Esophagus squamous epithelium (tissue), 5 donors: ENCODE measurements at regions of chr9 and their contacts with region 1.

Region 1: DNA sequence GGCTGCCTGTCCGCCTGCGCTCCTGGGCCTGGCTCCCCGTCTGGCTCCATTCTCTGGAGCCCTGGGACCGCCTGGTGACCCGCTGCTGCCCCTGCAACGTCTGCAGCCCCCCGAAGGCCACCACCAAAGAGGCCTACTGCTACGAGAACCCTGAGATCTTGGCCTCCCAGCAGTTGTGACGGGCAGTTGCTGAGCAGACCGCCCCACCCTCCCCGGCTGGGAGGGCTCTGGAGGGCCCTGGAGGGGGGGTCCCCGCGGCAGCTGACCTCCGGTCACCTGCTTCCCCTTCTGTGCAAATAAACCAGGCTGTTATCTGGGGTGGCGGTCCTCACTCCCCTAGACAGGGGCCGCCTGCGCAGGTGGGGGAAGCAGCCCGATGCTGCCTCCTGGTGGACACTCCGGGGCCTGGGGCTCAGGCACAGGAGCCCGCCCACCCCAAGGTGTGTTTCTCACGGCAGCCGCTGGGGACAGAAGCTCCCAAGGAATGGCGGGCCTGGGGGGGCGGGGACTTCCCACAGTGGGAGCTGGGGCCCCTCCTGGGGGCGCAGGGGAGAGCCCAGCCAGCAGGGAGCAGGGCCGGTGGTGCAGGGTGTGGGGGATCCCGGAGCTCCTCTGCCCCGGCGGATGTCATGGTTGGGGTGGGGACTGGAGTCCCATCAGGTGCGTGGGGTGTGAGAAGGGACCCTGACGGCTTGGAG is 4.7 kb upstream of the TUBB4B start:
- DNase-seq: no peak
- H3K4me3 ChIP-seq: peak overlapping the region in 3 of 4 donors; percentile 7 to 40 (median 7)
- H3K27ac ChIP-seq: peak overlapping the region in 1 of 4 donors; percentile 39
- H3K4me1 ChIP-seq: peaks cover 16 to 53% (median 23%) of the 10 kb centered on the region in 3 donors
- H3K27me3 ChIP-seq: peaks cover 0 to 49% (median 0%) of the 10 kb centered on the region in 4 donors
- CTCF ChIP-seq: peak; percentile 99 to 100 (median 100)
- POLR2A ChIP-seq: no peak

Region 2: DNA sequence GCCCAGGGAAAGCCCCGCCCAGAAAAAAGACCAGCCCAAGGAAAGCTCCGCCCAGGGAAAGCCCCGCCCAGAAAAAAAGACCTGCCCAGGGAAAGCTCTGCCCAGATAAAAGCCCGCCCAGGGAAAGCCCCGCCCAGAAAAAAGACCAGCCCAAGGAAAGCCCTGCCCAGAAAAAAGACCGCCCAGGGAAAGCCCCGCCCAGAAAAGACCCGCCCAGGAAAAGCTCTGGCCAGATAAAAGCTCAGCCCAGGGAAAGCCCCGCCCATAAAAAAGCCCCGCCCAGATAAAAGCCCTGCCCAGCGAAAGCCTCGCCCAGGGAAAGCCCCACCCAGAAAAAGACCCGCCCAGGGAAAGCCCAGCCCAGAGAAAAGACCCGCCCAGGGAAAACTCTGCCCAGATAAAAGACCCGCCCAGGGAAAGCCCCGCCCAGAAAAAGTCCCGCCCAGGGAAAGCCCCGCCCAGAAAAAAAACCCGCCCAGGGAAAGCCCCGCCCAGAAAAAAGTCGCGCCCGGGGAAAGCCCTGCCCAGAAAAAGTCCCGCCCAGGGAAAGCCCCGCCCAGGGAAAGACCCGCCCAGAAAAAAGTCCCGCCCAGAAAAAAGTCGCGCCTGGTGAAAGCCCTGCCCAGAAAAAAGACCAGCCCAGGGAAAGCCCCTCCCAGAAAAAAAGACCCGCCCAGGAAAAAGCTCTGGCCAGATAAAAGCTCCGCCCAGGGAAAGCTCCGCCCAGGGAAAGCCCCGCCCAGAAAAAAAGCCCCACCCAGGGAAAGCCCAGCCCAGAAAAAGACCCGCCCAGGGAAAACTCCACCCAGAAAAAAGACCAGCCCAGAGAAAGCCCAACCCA is 85.5 kb before region 1 on chr9:
- intact Hi-C with region 1: no loop called
- DNase-seq: no peak
- H3K4me3 ChIP-seq: no peak overlapping the region
- H3K27ac ChIP-seq: no peak overlapping the region
- H3K4me1 ChIP-seq: no peaks in the 10 kb centered on the region
- H3K27me3 ChIP-seq: peaks cover 0 to 54% (median 0%) of the 10 kb centered on the region in 4 donors
- CTCF ChIP-seq: no peak
- POLR2A ChIP-seq: no peak

Region 3: GRCh38 chr9:137188490-137189296 is 47.7 kb before region 1 on chr9 and contains the starts of genes ANAPC2 and SSNA1:
- intact Hi-C with region 1: loop called (anchors 10 kb)
- DNase-seq: peak; percentile 62
- H3K4me3 ChIP-seq: peak within 1 kb of the TSS; percentile 78 to 100 (median 88)
- H3K27ac ChIP-seq: peak within 1 kb of the TSS; percentile 85 to 99 (median 98)
- H3K4me1 ChIP-seq: peaks cover 41 to 74% (median 43%) of the 10 kb centered on the region in 3 donors
- H3K27me3 ChIP-seq: no peaks in the 10 kb centered on the region
- CTCF ChIP-seq: peak in 4 of 6 experiments; percentile 16 to 73 (median 36)
- POLR2A ChIP-seq: peak in 3 of 4 donors; percentile 89 to 93 (median 92)
- total RNA-seq, gene ANAPC2: 14.0 to 34.1 (median 25.1) TPM
- total RNA-seq, gene SSNA1: 67.1 to 124 (median 96.7) TPM